Common myeloid progenitor, CD34-positive (primary cell): ENCODE measurements at regions of chr9 and their contacts with region 1.

Region 1: DNA sequence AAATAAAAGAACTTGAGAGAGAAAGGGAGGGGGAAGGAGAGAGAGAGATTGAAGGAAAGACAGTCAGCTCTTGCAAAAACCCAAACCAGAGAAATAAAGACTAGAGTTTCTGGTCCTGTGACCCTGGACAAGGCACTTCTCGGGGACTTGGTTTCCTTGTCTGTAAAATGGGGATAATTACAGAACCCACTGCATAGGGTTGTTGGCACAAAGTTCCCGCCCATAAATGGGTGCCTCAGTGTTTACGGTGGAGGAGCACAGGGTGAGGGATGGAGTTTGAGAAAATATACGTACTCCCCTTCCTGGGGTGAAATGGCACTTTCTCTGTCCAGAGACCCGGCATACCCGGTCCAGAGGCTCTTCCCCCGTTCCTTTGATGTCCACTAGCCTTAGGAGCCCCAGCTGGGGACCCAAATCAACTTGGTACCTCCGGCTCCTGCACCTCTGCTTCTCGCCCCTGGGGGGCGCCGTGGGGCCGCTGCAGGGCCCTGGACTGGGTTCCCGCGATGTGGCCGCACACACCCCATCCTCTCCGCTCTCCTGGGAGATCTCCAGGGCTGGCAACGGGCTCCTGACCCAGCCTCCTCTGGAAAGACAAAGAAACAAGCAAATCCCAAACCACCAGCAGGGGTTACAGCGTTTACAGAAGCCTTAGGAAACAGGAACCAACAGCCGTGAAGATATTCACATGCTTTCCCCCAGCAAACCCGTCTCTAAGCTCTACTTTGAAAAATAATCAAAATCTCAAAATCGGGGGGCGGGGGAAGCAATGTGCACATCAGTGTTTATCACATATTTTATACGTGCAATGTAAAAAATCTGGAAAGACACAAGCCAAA is 26.3 kb downstream of the PTGES start:
- DNase-seq: peak; percentile 46 to 67 (median 67)
- H3K4me3 ChIP-seq: peak overlapping the region in 2 of 7 experiments; percentile 52 to 61
- H3K27ac ChIP-seq: no peak overlapping the region
- H3K4me1 ChIP-seq: peaks cover 0 to 3% (median 2%) of the 10 kb centered on the region in 4 experiments
- H3K27me3 ChIP-seq: peaks cover 0 to 9% (median 2%) of the 10 kb centered on the region in 5 experiments

Region 2: DNA sequence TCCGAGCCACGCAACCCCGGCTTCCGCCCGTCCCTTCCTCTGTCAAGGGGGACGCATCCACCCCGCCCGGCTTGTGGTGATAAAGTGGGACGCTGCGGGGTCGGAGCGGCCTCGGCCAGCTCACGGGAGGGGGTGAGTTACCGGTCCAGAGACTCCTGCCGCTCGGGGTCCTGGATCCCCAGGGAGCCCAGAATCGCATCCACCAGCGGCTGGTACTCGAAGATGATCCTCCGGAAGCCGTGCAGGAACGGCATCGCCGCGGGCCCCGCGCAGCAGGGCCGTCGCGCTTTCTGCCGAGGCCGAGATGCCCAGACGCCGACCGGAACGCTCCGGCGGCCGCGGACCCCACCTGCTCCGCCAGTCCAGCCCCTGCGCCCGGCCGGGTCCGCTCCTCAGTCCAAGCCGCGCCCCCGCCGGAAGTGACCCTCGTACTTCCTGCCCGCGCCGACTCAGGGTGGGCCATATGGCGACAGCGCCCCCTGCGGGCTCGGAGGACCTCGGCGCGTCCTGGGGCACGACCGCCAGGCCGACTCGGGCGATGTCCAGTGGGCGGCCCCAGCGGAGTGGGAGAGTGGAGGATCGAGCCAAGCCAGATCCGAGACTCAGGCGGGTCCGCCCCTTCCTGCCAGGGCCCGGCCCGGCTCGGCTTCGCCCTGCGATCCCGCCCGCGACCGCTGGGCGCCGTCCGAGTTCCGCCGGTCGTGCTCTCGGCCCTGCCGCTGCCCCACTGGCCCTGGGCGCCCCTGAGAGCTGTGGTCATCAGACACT is 84.6 kb before region 1 on chr9 and contains the start of gene ASB6:
- CTCF ChIA-PET with region 1: interaction called, 16 read pairs
- POLR2A ChIA-PET with region 1: no interaction called
- DNase-seq: peak; percentile 95 to 98 (median 98)
- H3K4me3 ChIP-seq: peak within 1 kb of the TSS; percentile 80 to 97 (median 87)
- H3K27ac ChIP-seq: peak within 1 kb of the TSS; percentile 33 to 71
- H3K4me1 ChIP-seq: peaks cover 4 to 32% (median 27%) of the 10 kb centered on the region in 4 experiments
- H3K27me3 ChIP-seq: no peaks in the 10 kb centered on the region

Region 3: DNA sequence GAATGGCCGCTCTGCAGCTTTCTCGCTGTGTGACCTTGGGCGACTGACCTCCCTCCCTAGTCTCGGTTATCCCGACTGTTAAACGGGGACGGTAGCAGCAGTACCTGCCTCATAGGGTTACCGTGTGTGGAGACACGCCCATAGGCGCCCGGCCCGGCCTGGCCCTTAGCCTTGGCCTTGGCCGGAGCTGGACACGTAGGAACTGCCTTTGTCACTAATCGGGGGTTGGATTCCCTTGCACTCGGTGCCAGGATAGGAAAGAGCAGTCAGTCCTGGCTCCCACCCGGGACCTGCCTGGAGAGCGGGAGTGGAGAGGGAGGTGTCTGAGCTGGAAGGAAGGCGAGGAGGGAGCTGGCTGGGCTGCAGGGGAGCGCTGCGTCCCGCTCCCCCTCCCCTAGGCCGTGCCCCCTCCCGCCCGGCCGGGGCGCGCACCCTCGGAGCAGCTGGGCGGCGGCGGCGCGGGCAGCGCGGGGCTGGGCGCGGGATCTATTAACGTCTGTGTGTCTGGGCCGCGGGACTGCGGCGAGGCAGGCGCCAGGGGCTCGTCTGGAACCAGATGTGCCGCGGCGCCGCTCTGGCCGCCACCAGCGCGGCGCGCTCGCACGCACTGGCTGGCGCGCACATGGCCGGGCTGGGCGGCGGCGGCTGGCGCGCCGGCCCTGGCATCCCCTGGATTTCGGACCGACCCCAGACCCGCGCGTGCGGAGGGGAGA is 29.4 kb before region 1 on chr9:
- CTCF ChIA-PET with region 1: interaction called, 13 read pairs
- POLR2A ChIA-PET with region 1: no interaction called
- DNase-seq: peak; percentile 36 to 86 (median 77)
- H3K4me3 ChIP-seq: peak overlapping the region in 4 of 7 experiments; percentile 32 to 67 (median 53)
- H3K27ac ChIP-seq: no peak overlapping the region
- H3K4me1 ChIP-seq: peaks cover 0 to 16% (median 10%) of the 10 kb centered on the region in 4 experiments
- H3K27me3 ChIP-seq: peaks cover 3 to 57% (median 27%) of the 10 kb centered on the region in 5 experiments

Region 4: DNA sequence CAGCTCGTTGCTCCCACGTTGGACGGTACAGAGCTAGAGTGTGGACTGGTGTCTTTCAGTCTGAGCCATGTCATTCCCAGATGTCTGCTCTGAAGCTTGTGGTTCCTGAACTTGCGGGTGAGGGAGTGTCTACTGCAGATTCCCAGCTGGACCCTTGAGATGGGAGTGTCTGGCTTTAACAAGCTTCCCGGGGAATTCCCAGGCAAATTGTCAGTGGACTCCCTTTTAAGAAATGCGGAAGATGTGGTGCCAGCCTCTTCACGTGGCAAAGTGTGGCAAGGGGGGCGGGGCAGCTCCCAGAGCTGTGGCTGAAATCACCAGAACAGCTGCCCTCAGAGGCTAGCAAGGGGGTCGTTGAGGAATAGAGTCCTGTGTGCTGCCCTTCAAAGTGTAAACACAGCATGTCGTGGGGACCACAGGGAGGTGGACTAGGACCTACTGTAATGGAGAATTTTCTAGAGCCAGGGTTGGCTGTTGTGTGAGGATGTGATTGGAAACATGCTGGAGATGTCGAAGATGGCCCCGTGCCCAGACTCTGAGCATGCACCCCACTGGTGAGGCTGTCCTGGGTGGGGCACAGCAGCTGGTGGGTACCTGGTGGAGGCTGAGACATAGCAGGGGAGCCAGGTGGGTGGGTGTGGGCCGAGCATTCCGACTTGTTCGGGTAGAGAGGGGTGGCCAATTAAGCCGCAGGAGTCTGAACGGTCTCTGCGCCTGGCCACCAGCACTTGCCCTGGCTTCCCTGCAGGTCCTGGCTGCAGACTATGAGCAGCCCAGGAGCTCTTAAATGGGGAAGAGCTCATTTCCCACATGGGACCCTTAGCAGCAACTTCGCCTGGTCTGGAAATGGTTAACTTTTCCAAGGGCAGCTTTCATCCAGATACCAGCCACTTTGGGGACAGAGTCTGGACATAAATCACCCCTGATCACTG is 23.7 kb before region 1 on chr9:
- CTCF ChIA-PET with region 1: interaction called, 13 read pairs
- POLR2A ChIA-PET with region 1: no interaction called
- DNase-seq: no peak
- H3K4me3 ChIP-seq: no peak overlapping the region
- H3K27ac ChIP-seq: no peak overlapping the region
- H3K4me1 ChIP-seq: peaks cover 0 to 6% (median 3%) of the 10 kb centered on the region in 4 experiments
- H3K27me3 ChIP-seq: peaks cover 3 to 30% (median 16%) of the 10 kb centered on the region in 5 experiments

Region 5: GRCh38 chr9:129712634-129713401 is 13.7 kb before region 1 on chr9:
- CTCF ChIA-PET with region 1: interaction called, 21 read pairs
- POLR2A ChIA-PET with region 1: interaction called, 5 read pairs
- DNase-seq: peak in 2 of 3 donors; percentile 35 to 39
- H3K4me3 ChIP-seq: peak overlapping the region in 3 of 7 experiments; percentile 5 to 39 (median 29)
- H3K27ac ChIP-seq: no peak overlapping the region
- H3K4me1 ChIP-seq: peaks cover 4 to 26% (median 22%) of the 10 kb centered on the region in 4 experiments
- H3K27me3 ChIP-seq: peaks cover 0 to 17% (median 6%) of the 10 kb centered on the region in 5 experiments

Region 6: DNA sequence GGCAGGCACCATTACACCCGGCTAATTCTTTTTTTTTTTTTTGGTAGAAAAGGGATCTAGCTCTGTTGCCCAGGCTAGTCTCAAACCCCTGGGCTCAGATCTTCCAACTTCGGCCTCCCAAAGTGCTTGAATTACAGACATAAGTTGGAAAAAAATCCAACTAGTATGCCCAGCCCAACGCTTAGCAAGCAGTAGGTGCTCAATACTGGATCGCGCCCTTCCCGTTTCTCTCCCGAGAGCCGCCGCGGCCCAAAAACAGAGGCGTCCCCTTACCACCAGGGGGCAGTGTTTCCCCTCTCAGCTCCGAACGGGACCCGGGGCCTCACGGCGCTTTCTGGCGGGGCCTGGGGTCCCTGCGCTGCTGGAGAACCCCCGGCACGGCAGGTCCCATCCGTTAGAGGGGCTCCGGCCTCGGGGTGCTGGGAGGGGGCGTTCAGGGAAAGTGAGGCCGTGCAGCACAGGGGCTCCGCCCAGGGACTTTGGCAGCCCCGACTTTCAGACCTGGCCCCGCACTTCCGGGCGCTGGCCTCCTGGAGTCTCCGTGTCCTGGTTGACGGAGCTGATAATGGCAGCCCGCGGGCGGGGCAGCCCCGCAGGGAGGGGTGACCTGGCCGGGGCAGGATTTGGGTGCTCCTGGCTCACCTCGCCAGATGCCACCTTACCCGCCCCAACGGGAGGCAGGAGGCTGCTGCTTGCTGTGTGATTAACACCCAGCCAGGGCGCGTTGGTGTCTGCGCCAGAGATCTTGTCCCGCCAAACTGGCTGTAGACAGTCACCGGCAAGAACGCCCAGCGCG is 11.1 kb after region 1 on chr9:
- CTCF ChIA-PET with region 1: interaction called, 31 read pairs
- POLR2A ChIA-PET with region 1: no interaction called
- DNase-seq: peak; percentile 70 to 87 (median 85)
- H3K4me3 ChIP-seq: peak overlapping the region; percentile 2 to 81 (median 53)
- H3K27ac ChIP-seq: peak overlapping the region in 1 of 2 experiments; percentile 71
- H3K4me1 ChIP-seq: peaks cover 0 to 6% (median 5%) of the 10 kb centered on the region in 4 experiments
- H3K27me3 ChIP-seq: peaks cover 0 to 17% (median 7%) of the 10 kb centered on the region in 5 experiments

Region 7: GRCh38 chr9:129783516-129784361 is 57.2 kb after region 1 on chr9:
- CTCF ChIA-PET with region 1: interaction called, 77 read pairs
- POLR2A ChIA-PET with region 1: no interaction called
- DNase-seq: peak; percentile 75 to 89 (median 81)
- H3K4me3 ChIP-seq: no peak overlapping the region
- H3K27ac ChIP-seq: no peak overlapping the region
- H3K4me1 ChIP-seq: no peaks in the 10 kb centered on the region
- H3K27me3 ChIP-seq: peaks cover 0 to 13% (median 0%) of the 10 kb centered on the region in 5 experiments